ENCODE measurements at regions of chr3 and their contacts with region 1.

Region 1: GRCh38 chr3:197554562-197555280 is 1.0 kb downstream of the BDH1 start:
- DNase-seq: peak; percentile 96 to 97
- H3K4me3 ChIP-seq: peak overlapping the region; percentile 95
- H3K4me3 Mint-ChIP-seq: peak overlapping the region; percentile 80
- H3K27ac Mint-ChIP-seq: peak overlapping the region; percentile 74
- H3K4me1 ChIP-seq: peaks cover 21% of the 10 kb centered on the region
- H3K4me1 Mint-ChIP-seq: peaks cover 22% of the 10 kb centered on the region
- H3K27me3 ChIP-seq: no peaks in the 10 kb centered on the region
- H3K27me3 Mint-ChIP-seq: no peaks in the 10 kb centered on the region
- CTCF ChIP-seq: peak; percentile 53 to 90

Region 2: DNA sequence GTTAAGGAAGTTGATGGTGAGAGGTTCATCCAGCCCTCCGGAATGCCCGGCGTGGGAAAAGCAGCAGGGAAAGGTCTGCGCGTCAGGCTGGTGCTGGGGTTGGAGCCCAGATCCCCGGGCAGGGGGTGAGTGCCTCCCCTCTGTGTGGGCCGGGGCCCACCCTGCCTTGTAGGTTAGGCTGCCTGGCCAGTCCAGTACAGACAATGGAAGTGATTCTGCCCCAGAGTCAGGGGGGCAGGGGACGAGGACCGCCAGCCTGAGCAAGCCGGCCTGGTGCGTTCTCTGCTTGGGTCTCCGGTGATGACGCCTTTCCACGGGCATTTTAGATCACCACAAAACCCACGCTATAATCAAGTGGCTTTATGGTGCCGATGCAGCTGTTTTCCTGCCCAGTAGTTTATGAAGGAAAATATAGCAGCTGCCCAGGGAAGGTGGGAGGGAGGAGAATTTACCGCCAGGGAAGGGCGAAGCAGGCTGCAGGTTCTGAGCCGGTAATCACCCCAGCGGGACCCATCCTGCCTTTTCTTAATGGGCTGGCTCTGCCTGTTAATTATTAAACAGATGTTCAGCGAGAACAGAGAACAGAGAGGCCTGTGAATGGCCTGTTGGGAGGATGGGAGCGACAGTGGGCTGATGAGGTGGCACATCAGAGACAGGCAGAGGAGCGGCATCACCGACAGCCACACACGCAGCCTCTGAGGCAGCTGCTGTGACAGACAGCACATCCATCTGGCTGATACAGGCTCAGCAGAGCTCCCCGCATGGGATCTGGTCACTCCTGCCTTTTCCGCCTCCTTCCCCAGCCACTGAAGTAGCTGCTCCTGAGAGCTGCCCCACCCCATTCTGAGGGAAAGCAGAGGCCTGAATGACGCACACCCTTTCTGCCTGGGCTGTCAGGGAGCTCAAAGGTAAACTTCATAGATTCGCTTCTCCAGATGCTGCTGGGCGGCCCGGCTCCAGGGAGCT is 34.1 kb before region 1 on chr3:
- CTCF ChIA-PET with region 1: interaction called, 3 read pairs
- POLR2A ChIA-PET with region 1: interaction called, 5 read pairs
- intact Hi-C with region 1: loop called (anchors 2 kb)
- DNase-seq: peak; percentile 84 to 89
- H3K4me3 ChIP-seq: peak overlapping the region; percentile 17
- H3K4me3 Mint-ChIP-seq: peak overlapping the region; percentile 75
- H3K27ac Mint-ChIP-seq: peak overlapping the region; percentile 96
- H3K4me1 ChIP-seq: peaks cover 43% of the 10 kb centered on the region
- H3K4me1 Mint-ChIP-seq: peaks cover 39% of the 10 kb centered on the region
- H3K27me3 ChIP-seq: no peaks in the 10 kb centered on the region
- H3K27me3 Mint-ChIP-seq: no peaks in the 10 kb centered on the region
- CTCF ChIP-seq: no peak

Region 3: DNA sequence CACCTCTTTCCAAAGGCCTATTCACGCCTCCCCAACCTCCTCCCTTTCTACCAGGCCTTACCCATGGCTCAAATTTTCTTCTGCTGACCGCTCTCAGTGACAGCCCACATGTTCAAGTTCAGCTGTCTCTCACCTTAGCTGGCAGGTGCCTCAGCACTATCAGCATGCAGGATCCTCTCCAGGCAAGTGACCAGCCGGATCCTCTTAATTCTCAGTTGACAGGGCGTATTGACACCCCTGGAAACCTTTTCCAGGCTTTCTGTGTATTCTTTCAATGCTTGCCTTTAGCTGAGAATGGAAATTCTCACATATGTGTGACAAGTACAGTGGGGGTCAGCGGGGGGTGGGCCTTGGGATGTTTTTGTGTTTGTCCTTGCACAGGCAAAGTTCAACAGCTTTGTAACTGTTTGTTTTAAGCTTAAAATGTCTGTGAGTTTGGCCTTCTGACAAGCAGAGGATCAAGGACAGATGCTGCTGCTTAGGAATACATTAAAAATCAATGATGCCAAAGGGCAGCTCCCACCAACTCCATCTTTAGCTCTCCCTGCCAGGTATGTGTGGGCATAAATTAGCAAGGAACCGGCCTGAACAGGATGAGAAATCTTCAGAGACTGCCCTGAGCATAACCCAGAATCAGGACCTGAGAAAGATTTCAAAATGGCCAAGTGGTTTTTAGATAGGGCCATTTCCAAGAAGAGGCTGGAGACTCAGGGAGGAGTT is 18.5 kb after region 1 on chr3:
- CTCF ChIA-PET with region 1: no interaction called
- POLR2A ChIA-PET with region 1: no interaction called
- intact Hi-C with region 1: loop called (anchors 2 kb)
- DNase-seq: no peak
- H3K4me3 ChIP-seq: no peak overlapping the region
- H3K4me3 Mint-ChIP-seq: no peak overlapping the region
- H3K27ac Mint-ChIP-seq: peak overlapping the region; percentile 51
- H3K4me1 ChIP-seq: peaks cover 59% of the 10 kb centered on the region
- H3K4me1 Mint-ChIP-seq: peaks cover 29% of the 10 kb centered on the region
- H3K27me3 ChIP-seq: no peaks in the 10 kb centered on the region
- H3K27me3 Mint-ChIP-seq: no peaks in the 10 kb centered on the region
- CTCF ChIP-seq: no peak

Region 4: DNA sequence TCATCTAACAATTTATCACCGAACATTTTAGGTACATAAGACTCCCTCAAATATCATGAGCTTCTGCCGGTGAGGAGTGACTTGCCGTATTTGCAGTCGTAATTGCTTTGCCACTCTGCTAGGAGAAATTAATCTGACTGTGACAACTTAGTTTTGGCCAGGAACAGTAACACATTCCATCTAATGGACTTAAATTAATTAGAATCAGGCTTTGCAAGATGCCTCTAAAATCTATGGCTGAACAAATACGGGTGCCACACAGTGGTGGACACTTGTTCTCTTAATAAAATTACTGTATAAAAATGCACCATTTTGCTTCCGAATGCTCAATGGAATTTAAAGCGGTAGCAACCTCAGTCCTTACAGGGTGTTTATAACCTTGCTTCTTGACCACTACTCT is 28.6 kb after region 1 on chr3:
- CTCF ChIA-PET with region 1: no interaction called
- POLR2A ChIA-PET with region 1: interaction called, 12 read pairs
- intact Hi-C with region 1: no loop called
- DNase-seq: no peak
- H3K4me3 ChIP-seq: no peak overlapping the region
- H3K4me3 Mint-ChIP-seq: no peak overlapping the region
- H3K27ac Mint-ChIP-seq: no peak overlapping the region
- H3K4me1 ChIP-seq: 0 out of 2 replicates have a peak, but pooled peaks cover 6% of the 10 kb centered on the region
- H3K4me1 Mint-ChIP-seq: peaks cover 7% of the 10 kb centered on the region
- H3K27me3 ChIP-seq: no peaks in the 10 kb centered on the region
- H3K27me3 Mint-ChIP-seq: no peaks in the 10 kb centered on the region
- CTCF ChIP-seq: no peak

Region 5: DNA sequence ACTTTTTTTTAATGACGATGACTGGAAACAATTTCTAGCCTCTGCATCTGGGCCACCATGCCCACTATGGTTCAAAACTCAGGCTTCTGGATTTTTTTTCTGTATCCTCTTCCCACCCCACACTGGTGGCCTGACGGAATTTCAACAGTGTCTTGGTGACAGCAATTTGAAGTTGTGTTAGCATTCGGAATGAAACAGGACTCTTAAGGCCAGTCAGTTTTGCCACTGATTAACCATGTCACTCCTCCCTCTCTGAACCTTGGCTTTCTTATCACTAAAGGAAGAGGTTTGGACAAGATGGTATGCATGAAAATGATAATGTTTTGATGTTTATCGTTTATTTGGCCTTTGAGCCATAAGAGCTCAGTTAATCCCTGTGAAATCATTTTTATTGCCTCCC is 42.6 kb after region 1 on chr3:
- CTCF ChIA-PET with region 1: interaction called, 3 read pairs
- POLR2A ChIA-PET with region 1: interaction called, 3 read pairs
- intact Hi-C with region 1: loop called (anchors 1 kb)
- DNase-seq: peak; percentile 69 to 79
- H3K4me3 ChIP-seq: no peak overlapping the region
- H3K4me3 Mint-ChIP-seq: peak overlapping the region; percentile 57
- H3K27ac Mint-ChIP-seq: peak overlapping the region; percentile 74
- H3K4me1 ChIP-seq: peaks cover 51% of the 10 kb centered on the region
- H3K4me1 Mint-ChIP-seq: peaks cover 37% of the 10 kb centered on the region
- H3K27me3 ChIP-seq: no peaks in the 10 kb centered on the region
- H3K27me3 Mint-ChIP-seq: no peaks in the 10 kb centered on the region
- CTCF ChIP-seq: no peak